ENCODE measurements at regions of chr12 and their contacts with region 1.

Region 1: DNA sequence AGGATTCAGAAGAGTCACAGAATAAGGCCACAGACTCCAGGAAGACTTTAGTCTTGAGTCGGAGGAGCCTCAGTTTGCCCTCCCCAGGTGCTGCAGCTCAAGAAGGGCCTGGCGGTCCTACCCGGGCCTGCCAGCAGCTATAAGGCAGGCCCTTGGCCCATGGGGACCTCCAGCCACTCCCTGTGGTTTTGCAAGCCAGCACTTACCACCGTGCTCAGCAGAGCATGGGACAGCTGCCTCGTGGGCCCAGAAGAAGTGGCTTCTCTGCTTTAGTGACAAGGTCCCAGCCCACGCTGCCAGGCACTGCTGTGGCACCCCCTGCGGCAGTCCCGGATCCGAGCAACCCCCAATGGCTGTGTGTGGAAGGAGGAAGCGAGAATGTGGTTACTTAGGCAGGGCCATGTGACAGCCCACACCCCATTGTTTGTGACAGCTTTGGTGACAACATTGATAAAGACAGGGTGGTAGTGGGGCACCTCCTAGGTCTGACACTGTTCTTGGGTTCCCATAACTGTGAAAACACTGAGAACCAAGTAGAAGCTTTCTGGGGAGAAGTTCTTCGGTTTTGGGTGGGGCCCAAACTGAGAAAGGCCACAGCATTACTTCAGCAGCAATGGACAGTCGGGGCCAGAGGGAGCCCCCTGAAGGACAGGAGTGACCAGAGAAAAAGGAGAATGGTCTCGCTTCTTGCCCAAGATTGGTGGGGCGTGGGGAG is at the start of gene SELPLG:
- DNase-seq: no peak
- H3K4me3 ChIP-seq: no peak within 1 kb of the TSS
- H3K27ac ChIP-seq: no peak within 1 kb of the TSS
- H3K4me1 ChIP-seq: peaks cover 27% of the 10 kb centered on the region
- H3K27me3 ChIP-seq: no peaks in the 10 kb centered on the region
- CTCF ChIP-seq: no peak
- total RNA-seq, gene SELPLG: 0.35 and 0.96 TPM in 2 replicates

Region 2: GRCh38 chr12:108643941-108644810 is 10.5 kb after region 1 on chr12:
- CTCF ChIA-PET with region 1: interaction called, 4 read pairs
- POLR2A ChIA-PET with region 1: interaction called, 3 read pairs
- intact Hi-C with region 1: loop called (anchors 2 kb)
- DNase-seq: peak in 1 of 2 experiments; percentile 61
- H3K4me3 ChIP-seq: no peak overlapping the region
- H3K27ac ChIP-seq: no peak overlapping the region
- H3K4me1 ChIP-seq: no peaks in the 10 kb centered on the region
- H3K27me3 ChIP-seq: no peaks in the 10 kb centered on the region
- CTCF ChIP-seq: no peak

Region 3: DNA sequence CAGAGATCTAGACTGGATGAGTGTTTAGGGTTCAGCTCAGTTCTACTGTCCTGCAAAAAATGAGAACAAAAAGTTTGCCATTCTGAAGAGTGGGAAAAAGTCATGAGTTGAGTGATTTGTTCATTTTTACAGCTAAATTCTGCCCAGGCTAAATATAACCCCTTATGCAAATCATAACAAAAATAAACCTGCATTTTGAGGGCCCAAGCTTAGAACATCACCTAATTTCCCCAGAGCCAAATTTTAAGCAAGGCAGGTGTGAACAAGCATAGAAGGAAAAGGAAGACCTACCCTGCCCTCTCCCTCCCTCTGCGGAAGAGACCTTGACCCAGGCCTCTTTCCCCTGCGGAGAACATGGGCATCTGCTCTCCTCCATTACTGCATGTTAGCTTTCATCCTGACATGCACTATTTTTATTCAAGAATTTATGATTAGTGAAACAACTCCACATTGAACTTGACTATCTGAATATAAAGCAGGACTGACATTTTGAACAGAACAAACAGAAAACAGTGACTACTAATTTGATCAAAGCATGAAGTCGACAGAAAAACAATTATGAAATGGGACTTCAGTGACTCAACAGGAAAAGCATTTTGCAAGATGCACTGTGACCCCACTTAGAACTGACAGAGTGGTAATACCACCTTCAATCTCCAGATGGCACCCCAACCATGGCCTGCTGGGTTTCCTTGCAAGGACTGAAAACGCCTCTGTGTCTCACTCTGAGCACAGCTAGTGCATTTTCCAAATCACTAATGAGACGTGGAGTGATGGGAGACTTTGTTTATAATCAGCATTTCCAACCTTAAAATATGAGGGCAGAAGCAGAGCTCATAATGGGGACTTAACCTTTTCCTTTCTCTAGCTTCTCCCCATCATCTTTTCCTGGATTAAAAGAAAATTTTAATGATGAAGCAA is 30.9 kb after region 1 on chr12:
- CTCF ChIA-PET with region 1: no interaction called
- POLR2A ChIA-PET with region 1: no interaction called
- intact Hi-C with region 1: no loop called
- DNase-seq: peak; percentile 84 to 88
- H3K4me3 ChIP-seq: no peak overlapping the region
- H3K27ac ChIP-seq: peak overlapping the region; percentile 51
- H3K4me1 ChIP-seq: peaks cover 7% of the 10 kb centered on the region
- H3K27me3 ChIP-seq: no peaks in the 10 kb centered on the region
- CTCF ChIP-seq: peak; percentile 95

Region 4: DNA sequence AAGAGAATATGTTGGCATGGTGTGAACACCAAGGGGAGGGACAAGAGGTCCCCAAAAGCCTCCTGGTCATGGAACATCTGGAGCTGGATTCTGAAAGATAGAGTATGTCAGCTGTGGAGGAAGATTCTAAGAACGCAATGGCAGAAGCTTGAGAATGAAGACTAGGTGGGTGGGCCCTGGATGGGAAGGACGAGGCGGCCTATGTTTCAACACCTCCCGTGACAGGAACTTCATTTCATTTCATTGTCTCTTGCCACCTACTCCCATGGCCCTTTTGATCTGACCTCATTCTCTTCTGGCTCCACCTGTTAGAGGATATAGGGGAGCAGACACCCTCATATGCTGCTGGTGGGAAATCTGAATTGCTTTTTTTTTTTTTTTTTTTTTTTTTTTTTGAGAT is 467.1 kb after region 1 on chr12:
- CTCF ChIA-PET with region 1: no interaction called
- POLR2A ChIA-PET with region 1: interaction called, 22 read pairs
- intact Hi-C with region 1: no loop called
- DNase-seq: no peak
- H3K4me3 ChIP-seq: no peak overlapping the region
- H3K27ac ChIP-seq: no peak overlapping the region
- H3K4me1 ChIP-seq: peaks cover 12% of the 10 kb centered on the region
- H3K27me3 ChIP-seq: no peaks in the 10 kb centered on the region
- CTCF ChIP-seq: no peak